ENCODE measurements at regions of chr22 and their contacts with region 1.

Region 1: GRCh38 chr22:31749636-31750364 is at the start of gene PRR14L:
- DNase-seq: peak; percentile 96 to 100 (median 99)
- ATAC-seq: peak; percentile 75
- H3K4me3 ChIP-seq: peak within 1 kb of the TSS; percentile 84 to 90
- H3K4me3 Mint-ChIP-seq: peak within 1 kb of the TSS; percentile 98
- H3K27ac ChIP-seq: peak within 1 kb of the TSS; percentile 79 to 84
- H3K27ac Mint-ChIP-seq: peak within 1 kb of the TSS; percentile 97
- H3K4me1 ChIP-seq: peaks cover 40% of the 10 kb centered on the region
- H3K4me1 Mint-ChIP-seq: peaks cover 53% of the 10 kb centered on the region
- H3K27me3 ChIP-seq: no peaks in the 10 kb centered on the region
- H3K27me3 Mint-ChIP-seq: no peaks in the 10 kb centered on the region
- CTCF ChIP-seq: no peak
- total RNA-seq, gene PRR14L: 17.8 to 21.2 TPM

Region 2: DNA sequence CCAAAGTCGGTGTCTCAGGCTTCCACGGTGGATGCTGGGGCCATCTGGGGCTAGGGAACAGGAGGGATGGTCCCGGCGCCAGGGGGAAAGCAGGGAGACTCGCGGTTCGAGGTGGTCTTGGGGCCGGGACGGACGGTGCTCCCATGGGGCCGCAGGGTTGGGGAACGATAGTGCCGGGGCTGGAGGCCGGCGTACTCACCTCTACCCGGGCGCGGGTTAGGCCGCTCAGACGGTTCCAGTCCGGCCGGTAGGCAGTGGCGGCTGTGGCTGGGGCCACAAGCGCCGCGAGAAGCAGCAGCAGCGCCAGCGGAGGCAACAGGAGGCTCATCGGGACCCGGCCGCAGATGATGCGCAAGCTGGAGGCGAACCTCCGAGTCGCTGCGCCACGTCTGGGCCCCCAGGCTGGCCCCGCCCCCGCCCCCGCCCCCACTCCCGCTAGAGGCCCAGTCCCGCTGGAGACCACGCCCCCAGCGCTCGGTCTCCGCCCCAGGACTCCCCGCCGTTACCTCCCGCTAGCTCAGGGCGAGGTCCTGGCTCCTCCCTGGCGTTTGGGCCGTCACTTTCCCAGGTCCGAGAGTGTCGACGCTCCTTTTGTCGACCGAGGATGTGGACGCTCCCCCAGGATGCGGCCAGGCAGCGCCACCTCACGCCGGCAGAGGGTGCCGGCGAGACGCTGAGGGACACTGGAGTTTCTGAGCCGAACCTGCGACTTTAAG is 642.5 kb before region 1 on chr22 and contains the start of gene SELENOM:
- CTCF ChIA-PET with region 1: no interaction called
- POLR2A ChIA-PET with region 1: no interaction called
- intact Hi-C with region 1: loop called (anchors 5 to 10 kb)
- DNase-seq: peak; percentile 69 to 94 (median 85)
- ATAC-seq: peak; percentile 96
- H3K4me3 ChIP-seq: peak within 1 kb of the TSS; percentile 80 to 84
- H3K4me3 Mint-ChIP-seq: peak within 1 kb of the TSS; percentile 98
- H3K27ac ChIP-seq: peak within 1 kb of the TSS; percentile 72 to 80
- H3K27ac Mint-ChIP-seq: peak within 1 kb of the TSS; percentile 91
- H3K4me1 ChIP-seq: peaks cover 17% of the 10 kb centered on the region
- H3K4me1 Mint-ChIP-seq: peaks cover 25% of the 10 kb centered on the region
- H3K27me3 ChIP-seq: no peaks in the 10 kb centered on the region
- H3K27me3 Mint-ChIP-seq: no peaks in the 10 kb centered on the region
- CTCF ChIP-seq: peak; percentile 70
- total RNA-seq, gene SELENOM: 55.6 to 62.2 TPM

Region 3: GRCh38 chr22:31489604-31490495 is 259.9 kb before region 1 on chr22 and contains the start of gene EIF4ENIF1:
- CTCF ChIA-PET with region 1: no interaction called
- POLR2A ChIA-PET with region 1: no interaction called
- intact Hi-C with region 1: loop called (anchors 1 to 2 kb)
- DNase-seq: peak; percentile 71 to 93 (median 85)
- ATAC-seq: peak; percentile 80
- H3K4me3 ChIP-seq: peak within 1 kb of the TSS; percentile 78 to 79
- H3K4me3 Mint-ChIP-seq: peak within 1 kb of the TSS; percentile 93
- H3K27ac ChIP-seq: peak within 1 kb of the TSS; percentile 92
- H3K27ac Mint-ChIP-seq: peak within 1 kb of the TSS; percentile 98
- H3K4me1 ChIP-seq: peaks cover 18% of the 10 kb centered on the region
- H3K4me1 Mint-ChIP-seq: peaks cover 47% of the 10 kb centered on the region
- H3K27me3 ChIP-seq: no peaks in the 10 kb centered on the region
- H3K27me3 Mint-ChIP-seq: no peaks in the 10 kb centered on the region
- CTCF ChIP-seq: no peak
- total RNA-seq, gene EIF4ENIF1: 12.1 to 14.5 TPM

Region 4: GRCh38 chr22:31630331-31631329 is 119.2 kb before region 1 on chr22:
- CTCF ChIA-PET with region 1: no interaction called
- POLR2A ChIA-PET with region 1: no interaction called
- intact Hi-C with region 1: loop called (anchors 1 kb)
- DNase-seq: peak; percentile 69 to 94 (median 87)
- ATAC-seq: peak; percentile 92
- H3K4me3 ChIP-seq: peak overlapping the region; percentile 77 to 79
- H3K4me3 Mint-ChIP-seq: peak overlapping the region; percentile 90
- H3K27ac ChIP-seq: peak overlapping the region; percentile 85 to 98
- H3K27ac Mint-ChIP-seq: peak overlapping the region; percentile 94
- H3K4me1 ChIP-seq: peaks cover 40% of the 10 kb centered on the region
- H3K4me1 Mint-ChIP-seq: peaks cover 51% of the 10 kb centered on the region
- H3K27me3 ChIP-seq: no peaks in the 10 kb centered on the region
- H3K27me3 Mint-ChIP-seq: no peaks in the 10 kb centered on the region
- CTCF ChIP-seq: no peak

Region 5: GRCh38 chr22:31943976-31944699 is 194.3 kb after region 1 on chr22 and contains the start of gene YWHAH:
- CTCF ChIA-PET with region 1: interaction called, 3 read pairs
- POLR2A ChIA-PET with region 1: interaction called, 3 read pairs
- intact Hi-C with region 1: loop called (anchors 1 to 5 kb)
- DNase-seq: peak; percentile 71 to 91 (median 84)
- ATAC-seq: peak; percentile 65
- H3K4me3 ChIP-seq: peak within 1 kb of the TSS; percentile 64 to 69
- H3K4me3 Mint-ChIP-seq: peak within 1 kb of the TSS; percentile 92
- H3K27ac ChIP-seq: peak within 1 kb of the TSS; percentile 62 to 85
- H3K27ac Mint-ChIP-seq: peak within 1 kb of the TSS; percentile 90
- H3K4me1 ChIP-seq: peaks cover 17% of the 10 kb centered on the region
- H3K4me1 Mint-ChIP-seq: peaks cover 12% of the 10 kb centered on the region
- H3K27me3 ChIP-seq: no peaks in the 10 kb centered on the region
- H3K27me3 Mint-ChIP-seq: no peaks in the 10 kb centered on the region
- CTCF ChIP-seq: no peak
- total RNA-seq, gene YWHAH: 22.4 to 24.3 TPM

Region 6: DNA sequence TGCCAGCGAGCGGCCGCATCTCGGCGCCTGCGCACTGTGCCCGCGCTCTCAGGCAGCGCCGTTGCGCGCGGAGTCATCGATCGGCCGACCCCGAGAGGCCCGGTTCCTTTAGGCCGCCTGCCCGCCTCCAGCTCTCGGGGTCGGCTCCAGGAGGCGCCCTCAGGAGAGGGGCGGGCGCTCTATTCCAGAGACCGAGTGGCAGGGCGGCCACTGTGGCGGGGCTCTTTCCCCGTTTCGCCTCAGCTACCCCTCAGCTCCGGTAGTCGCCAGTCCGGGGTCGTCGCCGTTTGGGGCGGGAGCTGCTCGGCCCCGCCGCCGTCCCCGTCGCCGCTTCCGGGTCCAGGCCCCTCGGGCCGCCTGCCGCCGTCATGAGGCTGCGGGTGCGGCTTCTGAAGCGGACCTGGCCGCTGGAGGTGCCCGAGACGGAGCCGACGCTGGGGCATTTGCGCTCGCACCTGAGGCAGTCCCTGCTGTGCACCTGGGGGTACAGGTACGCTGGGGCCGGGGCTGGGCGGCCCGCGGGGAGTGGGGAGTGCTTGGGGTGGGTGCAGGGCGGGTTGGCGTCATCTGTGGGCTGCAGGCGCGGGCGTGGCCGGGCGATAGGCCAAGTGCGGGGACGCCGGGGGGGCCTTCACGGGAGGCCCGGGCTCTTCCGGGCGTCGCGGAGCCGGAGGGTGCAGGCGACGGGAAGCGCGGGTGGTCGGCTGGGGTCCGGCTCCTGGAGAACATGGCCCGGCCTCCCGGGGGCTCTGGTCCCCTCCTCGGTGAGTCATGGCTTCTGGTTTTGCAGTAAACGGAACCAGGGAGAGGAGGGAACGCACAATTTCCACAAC is 725.1 kb after region 1 on chr22 and contains the start of gene FBXO7:
- CTCF ChIA-PET with region 1: no interaction called
- POLR2A ChIA-PET with region 1: no interaction called
- intact Hi-C with region 1: loop called (anchors 2 to 5 kb)
- DNase-seq: peak; percentile 70 to 95 (median 86)
- ATAC-seq: peak; percentile 86
- H3K4me3 ChIP-seq: peak within 1 kb of the TSS; percentile 83 to 91
- H3K4me3 Mint-ChIP-seq: peak within 1 kb of the TSS; percentile 90
- H3K27ac ChIP-seq: peak within 1 kb of the TSS; percentile 90 to 92
- H3K27ac Mint-ChIP-seq: peak within 1 kb of the TSS; percentile 96
- H3K4me1 ChIP-seq: peaks cover 39% of the 10 kb centered on the region
- H3K4me1 Mint-ChIP-seq: peaks cover 24% of the 10 kb centered on the region
- H3K27me3 ChIP-seq: no peaks in the 10 kb centered on the region
- H3K27me3 Mint-ChIP-seq: no peaks in the 10 kb centered on the region
- CTCF ChIP-seq: peak; percentile 23
- total RNA-seq, gene FBXO7: 172 to 174 TPM